ENCODE measurements at regions of chr16 and their contacts with region 1.

Region 1: DNA sequence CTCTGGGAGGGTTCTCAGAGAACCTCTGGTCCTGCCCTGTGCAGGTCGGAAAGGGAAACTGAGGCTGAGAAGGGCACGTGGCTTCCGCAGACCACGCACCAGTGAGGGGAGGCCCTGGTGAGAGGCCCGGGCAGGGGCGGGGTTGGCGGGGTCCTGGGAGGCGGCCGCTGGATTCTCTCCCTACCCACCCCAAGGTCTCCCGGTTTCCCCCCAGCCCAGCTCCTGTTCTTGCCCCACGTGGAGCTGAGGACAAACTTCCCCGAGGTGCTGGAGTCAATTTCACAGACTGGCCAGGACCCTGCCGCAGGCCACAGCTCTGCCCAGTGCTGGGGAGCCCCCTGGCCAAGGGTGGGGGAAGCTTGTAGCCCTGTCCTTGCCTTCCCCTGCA is 11.5 kb downstream of the CCL17 start:
- DNase-seq: no peak
- ATAC-seq: no peak
- H3K4me3 Mint-ChIP-seq: no peak overlapping the region
- H3K27ac Mint-ChIP-seq: no peak overlapping the region
- H3K4me1 Mint-ChIP-seq: peaks cover 25% of the 10 kb centered on the region
- H3K27me3 Mint-ChIP-seq: no peaks in the 10 kb centered on the region

Region 2: GRCh38 chr16:57106767-57107166 is 309.3 kb before region 1 on chr16:
- CTCF ChIA-PET with region 1: no interaction called
- POLR2A ChIA-PET with region 1: no interaction called
- DNase-seq: no peak
- ATAC-seq: no peak
- H3K4me3 Mint-ChIP-seq: no peak overlapping the region
- H3K27ac Mint-ChIP-seq: peak overlapping the region; percentile 31
- H3K4me1 Mint-ChIP-seq: peaks cover 40% of the 10 kb centered on the region
- H3K27me3 Mint-ChIP-seq: peaks cover 4% of the 10 kb centered on the region

Region 3: DNA sequence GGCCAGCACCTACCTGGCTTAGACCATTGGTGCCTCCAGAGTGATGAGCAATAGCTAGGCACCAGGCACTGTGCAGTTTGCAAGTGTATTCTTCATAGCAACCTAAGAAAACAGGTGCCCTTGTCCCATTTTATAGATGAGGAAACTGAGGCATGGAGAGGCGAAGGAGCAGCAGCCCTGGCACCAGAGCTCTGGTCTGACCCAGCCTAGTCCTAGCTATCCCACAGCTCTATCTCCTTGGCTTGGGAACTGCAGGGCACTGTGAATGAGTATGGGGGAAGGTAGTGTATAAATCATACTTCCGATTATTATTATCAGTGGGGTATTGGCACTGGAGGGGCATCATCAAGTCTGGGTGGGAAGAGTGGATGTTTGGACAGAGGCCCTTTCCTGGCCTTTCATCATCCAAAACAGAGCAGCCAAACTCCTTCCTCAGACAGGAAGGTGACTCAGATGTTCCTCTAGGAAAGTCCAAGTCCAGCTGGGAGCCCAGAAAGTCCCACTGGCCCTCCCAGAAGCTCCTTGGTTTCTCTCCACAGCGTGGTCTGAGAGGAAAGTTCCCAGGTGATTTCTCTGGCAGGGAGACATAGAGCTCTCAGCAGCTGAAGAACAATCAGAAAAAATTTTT is 99.6 kb before region 1 on chr16:
- CTCF ChIA-PET with region 1: interaction called, 29 read pairs
- POLR2A ChIA-PET with region 1: no interaction called
- DNase-seq: no peak
- ATAC-seq: no peak
- H3K4me3 Mint-ChIP-seq: no peak overlapping the region
- H3K27ac Mint-ChIP-seq: no peak overlapping the region
- H3K4me1 Mint-ChIP-seq: peaks cover 18% of the 10 kb centered on the region
- H3K27me3 Mint-ChIP-seq: no peaks in the 10 kb centered on the region

Region 4: GRCh38 chr16:57403965-57404817 is 11.9 kb before region 1 on chr16 and contains the start of gene CCL17:
- CTCF ChIA-PET with region 1: interaction called, 29 read pairs
- POLR2A ChIA-PET with region 1: no interaction called
- DNase-seq: no peak
- ATAC-seq: peak; percentile 17
- H3K4me3 Mint-ChIP-seq: no peak within 1 kb of the TSS
- H3K27ac Mint-ChIP-seq: no peak within 1 kb of the TSS
- H3K4me1 Mint-ChIP-seq: peaks cover 2% of the 10 kb centered on the region
- H3K27me3 Mint-ChIP-seq: peaks cover 10% of the 10 kb centered on the region
- total RNA-seq, gene CCL17: 0.50 TPM in 1 of 2 experiments, not detected in the other

Region 5: DNA sequence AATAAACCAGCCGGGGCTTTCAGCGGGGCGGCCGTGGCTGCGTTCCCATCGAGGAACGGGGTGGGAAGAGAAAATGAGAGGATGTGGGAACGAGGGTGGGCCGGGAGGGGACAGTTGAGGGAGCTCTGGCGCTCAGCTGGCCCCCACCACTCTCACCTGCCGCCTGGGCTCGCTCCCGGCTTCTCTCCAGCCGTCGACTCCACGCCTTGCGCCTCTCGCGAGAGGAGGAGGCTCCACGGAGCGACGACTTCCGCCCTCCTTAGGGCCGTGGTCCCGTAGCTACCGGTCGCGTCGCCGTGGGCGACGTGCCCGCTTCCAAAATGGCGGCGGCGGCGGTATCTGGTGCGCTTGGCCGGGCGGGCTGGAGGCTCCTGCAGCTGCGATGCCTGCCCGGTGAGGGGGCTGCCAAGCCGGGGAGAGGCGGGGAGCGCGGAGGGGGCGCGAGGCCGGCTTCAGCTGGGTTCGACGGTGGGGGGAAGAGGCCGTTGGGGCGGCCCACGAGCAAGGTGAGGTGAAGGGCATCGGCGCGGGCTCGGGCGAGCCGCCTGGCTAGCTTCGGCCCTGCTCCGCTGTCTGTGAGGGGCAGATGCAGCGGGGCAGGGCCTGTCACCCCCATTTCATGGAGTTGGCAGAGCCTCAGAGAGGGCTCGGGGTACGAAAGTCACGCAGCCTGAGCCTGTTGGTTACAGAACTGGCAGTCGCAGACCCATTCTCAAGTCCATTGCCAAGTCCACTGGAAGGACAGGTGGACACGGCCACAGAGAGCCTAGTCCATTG is 31.3 kb after region 1 on chr16 and contains the starts of genes CIAPIN1 and COQ9:
- CTCF ChIA-PET with region 1: interaction called, 22 read pairs
- POLR2A ChIA-PET with region 1: interaction called, 4 read pairs
- DNase-seq: peak; percentile 96
- ATAC-seq: peak; percentile 99
- H3K4me3 Mint-ChIP-seq: peak within 1 kb of the TSS; percentile 93
- H3K27ac Mint-ChIP-seq: peak within 1 kb of the TSS; percentile 92
- H3K4me1 Mint-ChIP-seq: peaks cover 30% of the 10 kb centered on the region
- H3K27me3 Mint-ChIP-seq: no peaks in the 10 kb centered on the region
- total RNA-seq, gene CIAPIN1: 47.8 to 53.8 TPM
- total RNA-seq, gene COQ9: 38.2 to 40.4 TPM